AG04450 (cell line): ENCODE measurements at regions of chr20 and their contacts with region 1.

Region 1: GRCh38 chr20:4740774-4741431 is 19.2 kb downstream of the PRND start:
- DNase-seq: no peak
- H3K4me3 ChIP-seq: no peak overlapping the region
- H3K27ac ChIP-seq: no peak overlapping the region
- H3K27me3 ChIP-seq: peaks cover 16% of the 10 kb centered on the region
- CTCF ChIP-seq: peak; percentile 67

Region 2: DNA sequence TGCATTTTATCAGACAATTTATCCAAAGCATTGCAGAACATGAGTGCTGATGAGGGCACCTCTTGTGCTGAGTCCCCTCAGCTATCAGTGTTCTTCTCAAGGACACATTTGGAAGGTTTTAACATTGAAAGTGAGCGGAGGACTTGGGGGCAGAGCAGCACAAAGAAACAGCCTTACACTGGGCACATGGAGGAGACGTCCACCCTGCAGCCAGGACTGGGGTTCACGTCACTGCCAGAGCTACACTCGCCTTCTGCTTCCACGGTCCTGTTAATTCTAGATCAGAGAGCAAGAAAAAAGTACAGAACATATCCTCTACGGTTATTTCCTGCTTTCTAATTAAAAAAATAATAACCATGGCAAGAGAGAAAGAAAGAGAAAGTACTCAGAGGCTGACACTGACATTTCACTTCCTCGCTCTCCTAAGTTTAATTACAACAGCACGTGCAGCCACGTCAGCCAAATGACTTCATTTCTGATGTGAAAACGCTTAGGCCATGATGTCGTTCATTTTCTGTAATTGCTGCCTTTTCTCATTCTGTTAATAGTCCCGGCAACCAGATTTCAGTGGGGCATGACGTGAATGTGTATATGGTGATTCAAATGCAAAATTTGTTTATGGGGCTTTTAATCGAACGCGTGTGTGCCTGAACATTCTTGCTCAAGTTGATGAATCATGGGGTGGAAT is 14.0 kb before region 1 on chr20:
- CTCF ChIA-PET with region 1: interaction called, 37 read pairs
- POLR2A ChIA-PET with region 1: no interaction called
- DNase-seq: peak; percentile 36
- H3K4me3 ChIP-seq: peak overlapping the region; percentile 35; the same call in 1 of the 2 replicates
- H3K27ac ChIP-seq: peak overlapping the region; percentile 31
- H3K27me3 ChIP-seq: peaks cover 10% of the 10 kb centered on the region
- CTCF ChIP-seq: no peak

Region 3: DNA sequence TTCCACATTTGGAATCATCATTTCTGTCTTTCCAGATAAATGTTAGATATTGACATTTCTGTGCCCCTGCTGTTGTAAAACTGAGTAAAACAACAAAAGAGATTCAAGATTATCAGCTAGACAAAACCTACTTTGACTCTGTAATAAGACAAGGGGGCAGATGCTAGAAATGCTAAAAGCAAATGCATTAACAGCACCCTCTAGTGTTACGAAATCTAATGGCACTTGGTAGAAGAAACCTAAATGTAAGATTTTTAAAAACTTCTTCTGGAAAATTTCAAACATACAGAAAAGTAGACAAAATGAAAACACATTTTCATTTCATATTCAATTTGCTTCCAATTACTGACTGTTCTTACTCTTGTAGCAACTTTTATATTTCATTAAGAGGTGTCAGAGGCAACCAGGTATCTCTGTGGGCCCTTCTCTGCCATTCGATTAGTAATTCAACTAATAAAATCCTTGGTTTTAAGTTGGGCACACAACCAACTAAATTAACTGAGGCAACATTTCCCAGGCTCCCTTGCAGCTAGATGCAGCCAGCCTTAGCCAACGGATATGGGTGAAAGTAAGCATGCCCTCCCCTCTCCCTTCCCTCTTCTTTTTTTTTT is 215.4 kb after region 1 on chr20:
- CTCF ChIA-PET with region 1: interaction called, 34 read pairs
- POLR2A ChIA-PET with region 1: no interaction called
- DNase-seq: no peak
- H3K4me3 ChIP-seq: no peak overlapping the region
- H3K27ac ChIP-seq: no peak overlapping the region
- H3K27me3 ChIP-seq: no peaks in the 10 kb centered on the region
- CTCF ChIP-seq: peak; percentile 88

Region 4: DNA sequence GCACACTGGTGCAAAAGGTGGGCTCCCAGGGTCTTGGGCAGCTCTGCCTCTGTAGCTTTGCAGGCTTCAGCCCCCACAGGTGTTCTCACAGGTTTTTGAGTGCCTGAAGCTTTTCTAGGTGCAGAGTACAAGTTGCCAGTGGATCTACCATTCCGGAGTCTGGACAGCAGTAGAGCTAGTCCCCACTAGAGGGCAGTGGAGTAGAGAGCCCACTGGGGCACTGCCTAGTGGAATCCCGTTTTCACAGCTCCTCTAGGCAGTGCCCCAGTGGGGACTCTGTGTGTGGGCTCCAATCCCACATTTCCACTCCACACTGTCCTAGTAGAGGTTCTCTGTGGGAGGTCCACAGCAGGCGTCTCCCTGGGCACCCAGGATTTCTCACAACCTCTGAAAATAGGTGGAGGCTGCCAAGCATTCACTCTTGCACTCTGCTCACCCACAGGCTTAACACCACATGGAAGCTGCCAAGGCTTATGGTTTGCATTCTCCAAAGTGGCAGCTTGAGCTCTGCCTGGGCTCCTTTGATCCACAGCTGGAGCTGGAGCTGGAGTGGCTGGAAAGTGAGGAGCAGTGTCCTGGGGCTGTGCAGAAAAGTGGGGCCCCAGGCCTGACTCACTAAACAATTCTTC is 662.1 kb after region 1 on chr20:
- CTCF ChIA-PET with region 1: no interaction called
- POLR2A ChIA-PET with region 1: no interaction called
- DNase-seq: no peak
- H3K4me3 ChIP-seq: no peak overlapping the region
- H3K27ac ChIP-seq: no peak overlapping the region
- H3K27me3 ChIP-seq: no peaks in the 10 kb centered on the region
- CTCF ChIP-seq: peak; percentile 60